ENCODE measurements at regions of chr5 and their contacts with region 1.

Region 1: DNA sequence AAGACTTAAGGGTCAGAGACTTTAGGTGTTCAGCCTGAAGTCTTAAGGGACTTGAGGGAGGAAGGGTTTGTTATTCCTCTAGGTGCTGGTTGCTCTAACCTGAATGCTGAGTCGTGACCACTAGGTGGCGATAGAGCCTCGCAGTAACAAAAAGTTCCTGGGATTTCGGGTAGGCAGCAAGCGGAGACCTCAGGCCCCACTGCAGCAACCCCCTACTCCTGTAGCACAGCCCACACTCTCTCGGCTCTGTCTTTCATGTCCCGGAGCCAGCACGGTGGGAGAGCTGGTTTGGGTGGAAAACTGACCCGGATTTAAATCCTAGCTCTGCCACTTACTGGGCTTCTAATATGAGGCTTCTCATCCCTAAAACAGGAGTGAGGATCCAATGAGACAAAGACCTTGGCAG is 100.3 kb upstream of the PANK3 start:
- DNase-seq: peak in 2 of 3 donors; percentile 73 to 91
- ATAC-seq: peak; percentile 63
- H3K4me3 ChIP-seq: no peak overlapping the region
- H3K4me1 ChIP-seq: no peaks in the 10 kb centered on the region
- CTCF ChIP-seq: peak; percentile 82

Region 2: GRCh38 chr5:169302491-169303118 is 623.1 kb after region 1 on chr5:
- intact Hi-C with region 1: loop called in 1 of 2 experiments (anchors 10 kb)
- DNase-seq: peak; percentile 63 to 76 (median 70)
- ATAC-seq: peak; percentile 66
- H3K4me3 ChIP-seq: no peak overlapping the region
- H3K4me1 ChIP-seq: peaks cover 4% of the 10 kb centered on the region
- CTCF ChIP-seq: peak; percentile 79

Region 3: DNA sequence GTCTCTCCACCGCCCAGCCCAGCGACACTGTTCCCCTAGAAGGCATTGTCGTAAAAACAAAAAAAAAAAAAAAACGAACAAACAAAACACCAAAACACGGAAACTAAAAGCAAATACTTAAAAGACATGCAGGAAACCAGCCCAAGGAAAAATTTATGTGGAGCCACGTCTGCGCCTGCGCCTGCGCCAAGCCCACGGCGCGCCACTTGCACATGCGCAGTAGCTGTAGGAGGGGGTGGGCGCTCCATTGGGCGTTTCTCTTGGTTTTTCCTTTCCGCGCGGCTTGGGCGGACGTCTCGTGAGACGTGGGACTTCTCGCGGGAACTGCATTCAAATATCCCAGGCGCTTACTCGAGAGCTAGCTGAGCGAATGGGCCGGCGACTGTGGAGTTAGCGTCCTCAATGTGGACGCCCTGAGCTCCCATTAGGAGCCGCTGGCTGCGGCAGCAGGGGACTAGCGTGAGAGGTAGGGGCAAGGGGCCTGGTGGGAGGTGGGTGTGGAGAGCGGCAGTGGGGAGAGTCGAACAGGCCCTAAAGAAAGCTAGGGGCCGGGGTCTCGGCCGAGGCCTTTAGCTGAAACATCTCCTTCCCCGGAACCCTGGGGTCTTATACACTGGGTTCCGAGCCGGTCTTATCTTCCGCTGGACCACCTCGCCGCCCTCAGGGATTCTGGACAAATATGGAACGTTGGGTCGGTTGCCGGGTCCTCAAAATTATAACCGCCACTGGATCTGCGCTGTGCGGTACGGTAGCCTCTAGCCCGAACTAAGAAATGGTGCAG is 904.1 kb after region 1 on chr5 and contains the start of gene SPDL1:
- intact Hi-C with region 1: loop called in 1 of 2 experiments (anchors 10 kb)
- DNase-seq: peak; percentile 96 to 98 (median 97)
- ATAC-seq: peak; percentile 99
- H3K4me3 ChIP-seq: peak within 1 kb of the TSS; percentile 59
- H3K4me1 ChIP-seq: peaks cover 5% of the 10 kb centered on the region
- CTCF ChIP-seq: no peak
- total RNA-seq, gene SPDL1: 4.5 to 12.5 (median 5.8) TPM